MCF 10A (cell line): ENCODE measurements at regions of chr20 and their contacts with region 1.

Region 1: GRCh38 chr20:58420798-58421496 is 31.9 kb downstream of the VAPB start:
- DNase-seq: peak; percentile 61
- H3K4me3 Mint-ChIP-seq: no peak overlapping the region
- H3K27ac Mint-ChIP-seq: no peak overlapping the region
- H3K4me1 Mint-ChIP-seq: peaks cover 14% of the 10 kb centered on the region
- H3K27me3 Mint-ChIP-seq: no peaks in the 10 kb centered on the region
- CTCF ChIP-seq: no peak

Region 2: DNA sequence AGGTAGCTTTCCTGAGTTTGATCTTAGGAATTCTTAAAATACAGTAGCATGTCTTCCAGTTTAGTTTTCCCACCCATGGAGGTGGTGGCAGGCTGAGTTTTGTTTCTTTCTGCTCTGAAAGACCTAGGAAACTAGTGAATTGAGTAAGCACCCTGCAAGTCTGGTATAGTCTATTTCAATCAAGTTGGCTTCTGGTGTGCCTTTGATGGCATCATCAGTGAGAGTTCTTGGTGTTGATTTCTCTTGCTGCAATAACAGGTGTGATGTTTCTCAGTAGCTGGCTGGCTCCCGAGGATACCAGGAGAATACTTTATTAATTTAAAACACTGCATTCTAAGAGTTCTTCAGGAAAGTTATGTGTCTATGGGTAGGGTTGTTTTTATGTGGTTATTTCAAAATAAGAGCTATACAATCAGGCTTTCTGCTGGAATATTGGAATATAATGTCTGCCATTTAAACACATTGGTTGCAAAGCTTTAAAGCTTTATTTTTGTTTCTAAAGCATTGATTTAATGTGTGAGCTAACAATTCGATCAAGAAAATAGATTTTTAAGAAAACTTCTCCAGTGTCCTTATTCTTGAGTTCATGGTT is 12.9 kb before region 1 on chr20:
- CTCF ChIA-PET with region 1: interaction called, 5 read pairs
- POLR2A ChIA-PET with region 1: interaction called, 26 read pairs
- intact Hi-C with region 1: no loop called
- DNase-seq: peak; percentile 54
- H3K4me3 Mint-ChIP-seq: peak overlapping the region; percentile 56
- H3K27ac Mint-ChIP-seq: no peak overlapping the region
- H3K4me1 Mint-ChIP-seq: peaks cover 21% of the 10 kb centered on the region
- H3K27me3 Mint-ChIP-seq: no peaks in the 10 kb centered on the region
- CTCF ChIP-seq: no peak